ENCODE measurements at regions of chrX and their contacts with region 1.

Region 1: GRCh38 chrX:24241822-24242648 is 71.8 kb downstream of the SUPT20HL2 start:
- DNase-seq: no peak

Region 2: DNA sequence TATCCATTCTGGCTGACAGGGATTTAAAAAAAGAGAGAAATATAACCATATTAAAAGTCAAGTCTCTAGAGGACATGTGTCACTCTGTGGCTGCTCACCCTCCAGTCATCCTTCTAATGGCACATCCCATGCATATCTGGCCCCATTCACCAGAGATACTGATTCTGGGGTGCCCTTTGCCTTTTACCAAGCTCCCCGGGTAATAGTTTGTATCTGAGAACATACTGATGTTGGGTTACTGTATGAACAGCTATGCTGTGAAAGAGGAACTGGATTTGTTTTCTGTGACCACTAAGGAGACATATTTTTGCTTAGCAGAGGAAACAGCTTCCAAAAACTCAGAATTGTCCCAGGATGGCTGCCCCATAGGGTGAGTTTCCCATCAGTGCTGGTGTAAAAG is 403.1 kb before region 1 on chrX:
- intact Hi-C with region 1: no loop called
- DNase-seq: no peak

Region 3: DNA sequence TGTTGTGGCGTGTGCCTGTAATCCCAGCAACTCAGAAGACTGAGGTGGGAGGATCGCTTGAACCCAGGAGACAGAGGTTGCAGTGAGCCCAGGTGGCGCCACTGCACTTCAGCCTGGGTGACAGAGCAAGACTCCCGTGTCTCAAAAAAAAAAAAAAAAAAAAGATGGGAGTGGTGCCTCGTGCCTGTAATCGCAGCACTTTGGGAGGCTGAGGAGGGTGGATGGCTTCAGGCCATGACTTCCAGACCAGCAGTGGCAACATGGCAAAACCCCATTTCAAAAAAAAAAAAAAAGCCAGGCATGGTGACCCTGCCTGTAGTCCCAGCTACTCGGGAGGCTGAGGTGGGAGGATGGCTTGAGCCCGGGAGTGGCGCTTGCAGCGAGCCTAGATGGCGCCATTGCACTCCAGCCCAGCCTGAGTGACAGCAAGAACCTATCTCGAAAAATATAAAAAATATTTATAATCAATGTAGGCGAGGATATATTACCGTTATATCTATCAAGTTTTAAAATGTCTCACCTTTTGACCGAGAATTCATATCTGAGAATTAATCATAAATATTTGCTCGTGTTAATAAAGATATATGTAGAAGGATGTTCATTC is 160.3 kb before region 1 on chrX:
- intact Hi-C with region 1: loop called (anchors 10 kb)
- DNase-seq: peak in 7 of 10 donors; percentile 10 to 90 (median 38)

Region 4: GRCh38 chrX:24150051-24150790 is 91.8 kb before region 1 on chrX:
- intact Hi-C with region 1: loop called (anchors 1 kb)
- DNase-seq: peak; percentile 59 to 98 (median 89)